ENCODE measurements at regions of chr5 and their contacts with region 1.

Region 1: DNA sequence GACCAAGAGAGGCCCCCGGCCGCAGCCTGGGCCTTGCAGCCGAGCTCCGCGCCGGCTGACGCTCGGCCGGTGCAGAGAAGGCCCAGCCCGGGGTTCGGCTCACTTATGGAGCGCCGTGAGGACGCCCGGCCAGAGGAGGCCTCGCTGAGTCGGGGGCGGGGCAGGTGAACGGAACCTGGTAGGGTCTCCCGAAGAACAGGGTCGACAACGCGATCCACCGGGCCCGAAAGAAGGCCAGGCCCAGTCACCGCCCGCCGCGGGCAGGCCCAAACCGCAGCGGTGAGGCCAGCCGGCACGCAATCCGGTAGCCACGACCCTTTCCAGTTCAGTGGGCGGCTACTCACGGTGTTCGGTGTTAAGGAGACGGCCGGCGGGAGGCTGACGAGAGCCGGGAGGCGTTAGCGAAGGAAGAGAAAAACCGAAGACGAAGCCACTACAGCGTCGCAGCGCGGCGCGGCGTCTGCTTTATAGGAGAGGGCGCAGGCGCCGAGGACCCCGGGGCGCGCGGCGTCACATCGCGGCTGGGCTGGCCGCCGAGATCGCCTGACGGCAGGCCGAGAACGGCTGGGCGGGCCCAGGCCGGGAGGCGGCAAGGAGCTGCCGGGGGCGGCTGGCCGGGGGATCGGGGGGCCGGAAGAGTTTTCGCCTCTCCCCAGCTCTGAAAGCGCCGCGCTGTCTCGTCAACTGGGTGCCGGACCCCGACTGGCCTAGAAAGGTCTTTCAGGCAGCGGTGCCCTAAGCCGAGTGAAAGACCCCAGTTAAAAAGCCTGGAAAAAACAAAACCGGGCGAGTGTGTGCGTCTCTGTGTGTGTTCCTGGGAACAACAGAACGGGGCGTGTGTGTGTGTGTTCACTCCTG is at the start of gene SKP1:
- DNase-seq: peak; percentile 63 to 97 (median 78)

Region 2: DNA sequence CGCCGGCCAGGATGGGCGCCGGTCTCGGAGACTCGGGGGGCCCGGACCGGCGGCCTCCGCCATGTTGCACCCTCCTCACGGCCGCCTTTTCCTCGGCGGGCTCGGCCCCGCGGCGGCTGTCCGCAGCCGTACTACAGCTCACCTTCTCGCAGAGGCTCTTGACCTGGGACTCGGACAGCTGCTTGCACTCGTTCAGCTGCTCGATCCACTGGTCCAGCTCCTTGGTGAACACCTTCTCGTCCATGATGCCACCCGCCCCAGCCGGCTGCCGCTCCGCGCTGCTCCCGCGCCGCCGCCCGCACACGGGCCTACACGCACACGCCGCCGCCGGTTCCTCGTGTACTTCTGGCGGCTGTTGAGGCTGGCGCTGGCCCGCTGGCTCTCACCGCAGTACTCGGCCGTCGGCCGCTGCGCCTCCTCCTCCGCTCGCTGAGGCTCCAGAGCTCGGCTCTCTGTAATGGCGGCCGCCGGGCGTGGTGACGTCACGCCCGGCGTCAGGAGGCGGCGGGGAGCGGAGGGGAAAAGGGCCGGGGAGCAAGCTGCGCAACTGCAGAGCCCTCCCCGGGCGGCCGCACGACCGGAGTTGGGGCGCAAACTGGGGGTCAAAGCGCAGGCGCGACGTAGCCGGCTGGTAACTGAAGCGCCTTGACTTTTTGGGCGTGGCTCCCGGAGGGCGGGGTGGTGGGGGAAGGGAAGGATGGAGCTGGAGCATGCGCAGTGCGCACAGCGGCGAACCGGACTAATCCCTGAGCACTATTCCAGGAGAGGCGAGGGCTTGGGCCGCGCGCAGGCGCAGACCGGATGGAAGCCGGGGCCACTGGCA is 49.1 kb after region 1 on chr5 and contains the start of gene PPP2CA:
- intact Hi-C with region 1: loop called (anchors 2 kb)
- DNase-seq: peak; percentile 97 to 100 (median 99)